Heart left ventricle (tissue), 16 donors: ENCODE measurements at regions of chr14 and their contacts with region 1.

Region 1: DNA sequence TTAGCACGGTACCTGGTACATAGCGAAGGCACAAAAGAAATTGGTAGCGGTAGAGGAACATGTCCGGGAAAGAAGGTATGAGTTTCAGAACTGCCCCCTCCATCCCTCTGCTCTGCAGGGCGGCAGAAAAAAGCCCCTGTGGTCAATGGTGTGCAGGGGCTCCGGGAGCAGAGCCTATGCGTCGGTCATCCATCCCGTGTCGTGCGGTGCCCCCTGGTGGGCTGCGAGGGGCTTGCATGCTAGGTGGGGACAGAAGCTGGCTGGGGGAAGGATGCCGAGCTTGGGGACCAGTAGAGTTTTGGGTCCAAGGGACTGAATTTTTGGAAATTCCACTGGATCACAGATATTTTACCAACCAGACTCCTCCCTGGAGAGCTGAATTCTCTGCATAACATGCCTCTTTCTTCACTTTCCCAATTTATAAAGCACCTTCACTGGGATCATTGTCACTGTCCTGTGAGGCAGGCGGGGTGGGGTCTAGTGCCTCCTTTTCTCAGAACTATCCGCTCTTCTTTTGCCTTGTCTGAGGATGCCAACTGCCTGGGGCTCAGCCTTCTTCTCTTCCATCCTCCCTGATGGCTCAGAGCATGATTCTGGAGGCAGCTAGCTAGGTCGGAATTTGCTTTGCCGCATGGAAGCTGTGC is 148.7 kb downstream of the SMOC1 start:
- DNase-seq: peak; percentile 50 to 88 (median 55)
- ATAC-seq: peak; percentile 59 to 83 (median 72)
- H3K4me3 ChIP-seq: no peak overlapping the region
- H3K27ac ChIP-seq: no peak overlapping the region
- H3K4me1 ChIP-seq: no peaks in the 10 kb centered on the region
- H3K27me3 ChIP-seq: peaks cover 0 to 16% (median 0%) of the 10 kb centered on the region in 9 donors
- CTCF ChIP-seq: peak; percentile 80 to 91 (median 87)
- POLR2A ChIP-seq: no peak

Region 2: DNA sequence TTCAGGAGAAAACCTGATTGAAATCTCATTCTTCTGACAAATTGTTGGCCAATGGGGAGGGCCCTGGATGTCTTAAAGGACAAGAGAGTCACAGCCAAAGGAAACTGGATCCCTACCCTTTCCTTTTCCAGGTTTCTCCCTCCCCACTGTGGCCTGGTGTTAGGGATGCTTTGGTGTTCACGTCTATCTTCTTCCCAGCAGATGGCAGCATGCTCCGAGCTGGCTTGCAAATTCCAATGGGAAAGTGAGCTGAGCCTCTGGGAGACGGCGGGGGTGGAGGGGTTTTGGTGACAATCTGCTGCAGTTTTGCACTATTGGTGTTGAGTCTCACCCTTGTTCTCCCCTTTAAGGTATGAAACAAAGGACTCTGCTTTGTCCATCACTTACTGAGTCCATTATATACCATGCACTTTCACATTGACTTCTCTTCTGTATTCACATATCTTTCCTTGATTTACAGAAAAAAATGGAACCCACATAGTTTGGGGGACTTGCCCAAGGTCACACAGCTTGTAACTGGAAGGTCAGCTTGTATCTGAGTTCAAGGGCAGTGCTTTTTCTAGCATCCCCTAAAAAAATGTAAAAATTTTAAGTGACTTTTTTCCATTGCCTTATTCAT is 492.6 kb before region 1 on chr14:
- intact Hi-C with region 1: loop called in 3 of 10 experiments (anchors 5 to 10 kb)
- DNase-seq: peak in 2 of 5 donors; percentile 25 to 40
- ATAC-seq: peak in 2 of 4 donors; percentile 38 to 57
- H3K4me3 ChIP-seq: no peak overlapping the region
- H3K27ac ChIP-seq: no peak overlapping the region
- H3K4me1 ChIP-seq: peaks cover 0 to 5% (median 0%) of the 10 kb centered on the region in 12 donors
- H3K27me3 ChIP-seq: peaks cover 0 to 16% (median 0%) of the 10 kb centered on the region in 9 donors
- CTCF ChIP-seq: peak; percentile 17 to 70 (median 48)
- POLR2A ChIP-seq: no peak

Region 3: GRCh38 chr14:69818757-69819191 is 209.1 kb before region 1 on chr14:
- intact Hi-C with region 1: loop called (anchors 1 to 2 kb)
- DNase-seq: peak in 3 of 5 donors; percentile 22 to 45 (median 32)
- ATAC-seq: peak in 3 of 4 donors; percentile 64 to 76 (median 73)
- H3K4me3 ChIP-seq: no peak overlapping the region
- H3K27ac ChIP-seq: no peak overlapping the region
- H3K4me1 ChIP-seq: peaks cover 0 to 4% (median 0%) of the 10 kb centered on the region in 12 donors
- H3K27me3 ChIP-seq: peaks cover 0 to 33% (median 12%) of the 10 kb centered on the region in 9 donors
- CTCF ChIP-seq: peak; percentile 72 to 88 (median 83)
- POLR2A ChIP-seq: no peak

Region 4: DNA sequence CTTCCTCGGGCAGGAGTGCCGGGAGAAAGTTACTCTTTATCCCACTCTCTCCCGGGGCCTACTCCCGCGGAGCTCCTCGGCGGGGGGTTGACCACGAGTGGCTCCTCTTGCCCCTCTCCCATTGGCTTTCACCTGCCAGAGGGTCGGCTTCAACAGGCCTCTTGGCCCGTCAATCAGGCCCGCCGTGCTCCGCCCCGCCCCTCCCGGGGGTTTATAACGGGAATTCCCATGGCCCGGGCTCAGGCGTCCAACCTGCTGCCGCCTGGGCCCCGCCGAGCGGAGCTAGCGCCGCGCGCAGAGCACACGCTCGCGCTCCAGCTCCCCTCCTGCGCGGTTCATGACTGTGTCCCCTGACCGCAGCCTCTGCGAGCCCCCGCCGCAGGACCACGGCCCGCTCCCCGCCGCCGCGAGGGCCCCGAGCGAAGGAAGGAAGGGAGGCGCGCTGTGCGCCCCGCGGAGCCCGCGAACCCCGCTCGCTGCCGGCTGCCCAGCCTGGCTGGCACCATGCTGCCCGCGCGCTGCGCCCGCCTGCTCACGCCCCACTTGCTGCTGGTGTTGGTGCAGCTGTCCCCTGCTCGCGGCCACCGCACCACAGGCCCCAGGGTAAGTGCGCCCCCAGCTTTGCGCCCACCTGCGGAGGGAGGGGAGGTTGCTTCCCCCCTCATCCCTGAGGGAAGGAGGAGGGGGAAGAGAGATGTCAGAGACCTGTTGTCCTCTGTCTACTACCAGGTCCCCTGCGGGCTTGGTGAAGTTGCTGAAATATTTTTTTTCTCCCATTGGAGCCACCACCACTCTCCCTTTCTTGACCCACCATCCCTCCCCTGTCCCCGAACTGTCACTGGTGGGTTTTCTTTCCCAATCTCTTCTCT is 148.5 kb before region 1 on chr14 and contains the start of gene SMOC1:
- intact Hi-C with region 1: loop called in 2 of 10 experiments (anchors 5 kb)
- DNase-seq: peak in 3 of 5 donors; percentile 27 to 43 (median 31)
- ATAC-seq: peak in 3 of 4 donors; percentile 70 to 82 (median 76)
- H3K4me3 ChIP-seq: peak within 1 kb of the TSS in 10 of 12 donors; percentile 12 to 45 (median 36)
- H3K27ac ChIP-seq: no peak within 1 kb of the TSS
- H3K4me1 ChIP-seq: peaks cover 0 to 11% (median 0%) of the 10 kb centered on the region in 12 donors
- H3K27me3 ChIP-seq: peaks cover 5 to 69% (median 35%) of the 10 kb centered on the region in 9 donors
- CTCF ChIP-seq: no peak
- POLR2A ChIP-seq: no peak
- total RNA-seq, gene SMOC1: 0.57 to 2.8 (median 0.79) TPM in 7 of 9 donors, not detected in the others

Region 5: GRCh38 chr14:69980457-69981425 is 47.2 kb before region 1 on chr14:
- intact Hi-C with region 1: no loop called
- DNase-seq: no peak
- ATAC-seq: no peak
- H3K4me3 ChIP-seq: no peak overlapping the region
- H3K27ac ChIP-seq: no peak overlapping the region
- H3K4me1 ChIP-seq: no peaks in the 10 kb centered on the region
- H3K27me3 ChIP-seq: peaks cover 0 to 22% (median 0%) of the 10 kb centered on the region in 9 donors
- CTCF ChIP-seq: no peak
- POLR2A ChIP-seq: no peak